HepG2 (cell line): ENCODE measurements at regions of chr7 and their contacts with region 1.

Region 1: DNA sequence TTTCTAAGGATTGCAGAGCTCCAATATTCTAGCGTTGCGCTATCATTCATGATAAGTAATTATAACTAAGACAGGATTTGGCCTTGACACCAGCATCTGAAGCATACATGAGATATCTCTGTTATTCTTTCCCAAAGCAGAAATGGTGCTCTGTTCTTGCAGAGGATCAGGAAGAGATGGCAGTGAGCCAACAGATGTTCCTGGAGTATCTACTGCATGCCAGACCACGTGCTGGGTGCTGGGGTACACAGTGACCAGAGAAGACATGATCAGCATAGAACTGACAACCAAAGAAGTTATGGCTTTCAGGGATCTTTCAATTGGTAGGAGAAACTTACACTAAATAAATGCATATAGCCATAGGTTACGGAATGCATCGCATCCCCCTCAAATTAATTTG is 63.7 kb upstream of the PLXNA4 start:
- DNase-seq: no peak
- ATAC-seq: no peak
- H3K4me3 ChIP-seq: no peak overlapping the region
- H3K27ac ChIP-seq: no peak overlapping the region
- H3K4me1 ChIP-seq: no peaks in the 10 kb centered on the region
- H3K27me3 ChIP-seq: peaks cover 0 to 12% of the 10 kb centered on the region in 2 experiments; a peak in 2 of 5 replicates
- CTCF ChIP-seq: no peak
- EP300 ChIP-seq: no peak
- POLR2A ChIP-seq: no peak
- RAD21 ChIP-seq: no peak

Region 2: DNA sequence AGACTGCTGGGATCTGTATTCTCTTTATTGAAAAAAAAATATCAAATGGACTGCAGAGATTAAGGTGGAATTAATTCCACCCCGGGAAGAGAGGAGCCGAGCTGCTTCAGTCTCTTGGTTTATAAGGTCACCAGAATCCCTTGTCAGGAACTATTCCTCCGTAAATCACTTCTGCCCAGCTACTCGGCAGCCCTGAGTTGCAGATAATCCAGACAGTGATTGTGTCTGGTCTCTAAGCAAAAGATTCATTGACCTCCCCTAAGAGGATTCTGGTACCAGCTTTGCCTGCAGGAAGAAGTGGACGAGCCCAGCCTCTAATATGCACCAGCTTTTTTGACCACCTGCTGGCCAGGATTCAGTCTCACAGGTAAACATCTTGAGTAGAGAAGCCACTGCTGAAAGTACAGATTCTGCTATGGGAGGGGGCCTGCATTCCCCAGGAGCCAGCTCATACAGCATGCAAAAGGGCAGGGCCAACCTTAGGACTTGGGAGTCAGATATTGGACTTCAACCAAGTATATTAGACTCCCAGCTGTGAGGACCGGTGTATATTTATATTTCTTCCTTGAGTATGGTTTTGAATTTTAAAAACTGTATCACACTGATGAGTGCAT is 36.7 kb before region 1 on chr7:
- CTCF ChIA-PET with region 1: no interaction called
- POLR2A ChIA-PET with region 1: no interaction called
- in situ Hi-C with region 1: no loop called
- intact Hi-C with region 1: loop called (anchors 1 kb)
- DNase-seq: no peak
- ATAC-seq: no peak
- H3K4me3 ChIP-seq: no peak overlapping the region
- H3K27ac ChIP-seq: no peak overlapping the region
- H3K4me1 ChIP-seq: no peaks in the 10 kb centered on the region
- H3K27me3 ChIP-seq: no peaks in the 10 kb centered on the region; a peak in 1 of 5 replicates
- CTCF ChIP-seq: no peak
- EP300 ChIP-seq: no peak
- POLR2A ChIP-seq: no peak
- RAD21 ChIP-seq: no peak

Region 3: GRCh38 chr7:132677918-132678317 is 37.9 kb after region 1 on chr7:
- CTCF ChIA-PET with region 1: no interaction called
- POLR2A ChIA-PET with region 1: no interaction called
- in situ Hi-C with region 1: no loop called
- intact Hi-C with region 1: no loop called
- DNase-seq: no peak
- ATAC-seq: no peak
- H3K4me3 ChIP-seq: no peak overlapping the region
- H3K27ac ChIP-seq: no peak overlapping the region
- H3K4me1 ChIP-seq: no peaks in the 10 kb centered on the region
- H3K27me3 ChIP-seq: peaks cover 0 to 15% of the 10 kb centered on the region in 2 experiments; a peak in 2 of 5 replicates
- CTCF ChIP-seq: no peak
- EP300 ChIP-seq: no peak
- POLR2A ChIP-seq: no peak
- RAD21 ChIP-seq: no peak